ENCODE measurements at regions of chr16 and their contacts with region 1.

Region 1: DNA sequence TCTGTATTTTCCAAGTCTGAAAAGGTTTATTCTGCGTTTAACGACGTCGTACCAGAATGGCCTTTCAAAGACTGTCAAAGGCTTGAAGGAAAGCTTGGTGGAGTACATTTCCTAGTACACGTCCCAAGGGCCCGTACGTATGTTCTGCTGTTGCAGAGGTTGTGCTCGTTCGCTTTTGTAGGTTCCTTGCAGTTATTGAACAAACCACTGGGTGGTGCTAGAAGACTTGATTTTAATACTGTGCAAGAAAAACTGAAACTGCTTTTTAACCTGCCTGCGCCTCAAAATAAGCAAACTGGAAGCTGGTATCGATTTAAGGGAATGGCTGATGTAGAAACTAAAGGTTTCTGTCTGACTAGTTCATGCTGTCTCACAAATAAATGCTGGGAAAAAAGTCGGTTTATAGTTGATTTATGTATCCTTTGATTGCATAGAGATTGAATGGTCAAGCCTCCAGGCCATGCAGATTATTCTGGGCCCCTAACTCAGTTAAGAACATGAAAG is 54.6 kb downstream of the USP10 start:
- DNase-seq: no peak
- H3K4me3 ChIP-seq: peak overlapping the region in 1 of 4 donors; percentile 11
- H3K27ac ChIP-seq: peak overlapping the region; percentile 3 to 52 (median 40)
- H3K4me1 ChIP-seq: peaks cover 30 to 95% (median 84%) of the 10 kb centered on the region in 4 donors
- H3K27me3 ChIP-seq: no peaks in the 10 kb centered on the region
- CTCF ChIP-seq: peak; percentile 81 to 91 (median 85)
- EP300 ChIP-seq: no peak
- POLR2A ChIP-seq: no peak

Region 2: DNA sequence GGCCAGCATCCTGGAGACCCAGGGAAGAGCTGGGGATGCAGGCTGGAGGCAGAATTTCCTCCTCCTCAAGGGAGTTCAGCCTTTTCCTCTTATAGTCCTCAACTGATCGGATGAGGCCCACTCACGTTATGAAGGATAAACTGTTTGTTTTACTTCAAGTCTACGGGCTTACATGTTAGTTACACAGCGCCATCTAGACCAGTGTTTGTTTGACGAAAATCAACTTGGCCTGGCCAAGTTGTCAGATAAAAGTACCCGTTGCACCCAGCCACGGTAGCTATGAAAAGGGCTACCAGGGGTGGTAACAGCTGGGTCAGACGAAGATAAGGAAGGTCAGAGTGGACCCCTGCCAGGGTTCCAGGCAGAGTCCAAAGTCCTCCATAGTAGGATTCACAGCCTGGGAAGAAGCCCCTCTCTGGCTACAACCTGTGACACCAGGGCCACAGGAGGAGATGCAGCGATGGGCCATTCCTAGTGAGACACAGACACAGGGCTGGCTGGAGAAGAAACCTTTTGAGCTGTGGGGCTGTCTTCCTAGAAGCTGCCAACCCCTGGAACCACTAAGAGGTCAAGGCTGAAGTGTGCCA is 289.3 kb before region 1 on chr16:
- intact Hi-C with region 1: no loop called
- DNase-seq: no peak
- H3K4me3 ChIP-seq: no peak overlapping the region
- H3K27ac ChIP-seq: no peak overlapping the region
- H3K4me1 ChIP-seq: no peaks in the 10 kb centered on the region
- H3K27me3 ChIP-seq: no peaks in the 10 kb centered on the region
- CTCF ChIP-seq: no peak
- EP300 ChIP-seq: no peak
- POLR2A ChIP-seq: no peak

Region 3: GRCh38 chr16:84845496-84846129 is 91.2 kb after region 1 on chr16:
- intact Hi-C with region 1: loop called (anchors 5 kb)
- DNase-seq: no peak
- H3K4me3 ChIP-seq: no peak overlapping the region
- H3K27ac ChIP-seq: peak overlapping the region in 3 of 4 donors; percentile 94 to 97 (median 96)
- H3K4me1 ChIP-seq: peaks cover 7 to 64% (median 45%) of the 10 kb centered on the region in 4 donors
- H3K27me3 ChIP-seq: no peaks in the 10 kb centered on the region
- CTCF ChIP-seq: no peak
- EP300 ChIP-seq: no peak
- POLR2A ChIP-seq: no peak

Region 4: GRCh38 chr16:84952335-84953189 is 198.2 kb after region 1 on chr16:
- intact Hi-C with region 1: loop called (anchors 1 kb)
- DNase-seq: peak; percentile 95
- H3K4me3 ChIP-seq: no peak overlapping the region
- H3K27ac ChIP-seq: peak overlapping the region in 3 of 4 donors; percentile 57 to 70 (median 62)
- H3K4me1 ChIP-seq: peaks cover 9 to 24% (median 18%) of the 10 kb centered on the region in 4 donors
- H3K27me3 ChIP-seq: no peaks in the 10 kb centered on the region
- CTCF ChIP-seq: peak; percentile 85 to 93 (median 92)
- EP300 ChIP-seq: no peak
- POLR2A ChIP-seq: no peak

Region 5: DNA sequence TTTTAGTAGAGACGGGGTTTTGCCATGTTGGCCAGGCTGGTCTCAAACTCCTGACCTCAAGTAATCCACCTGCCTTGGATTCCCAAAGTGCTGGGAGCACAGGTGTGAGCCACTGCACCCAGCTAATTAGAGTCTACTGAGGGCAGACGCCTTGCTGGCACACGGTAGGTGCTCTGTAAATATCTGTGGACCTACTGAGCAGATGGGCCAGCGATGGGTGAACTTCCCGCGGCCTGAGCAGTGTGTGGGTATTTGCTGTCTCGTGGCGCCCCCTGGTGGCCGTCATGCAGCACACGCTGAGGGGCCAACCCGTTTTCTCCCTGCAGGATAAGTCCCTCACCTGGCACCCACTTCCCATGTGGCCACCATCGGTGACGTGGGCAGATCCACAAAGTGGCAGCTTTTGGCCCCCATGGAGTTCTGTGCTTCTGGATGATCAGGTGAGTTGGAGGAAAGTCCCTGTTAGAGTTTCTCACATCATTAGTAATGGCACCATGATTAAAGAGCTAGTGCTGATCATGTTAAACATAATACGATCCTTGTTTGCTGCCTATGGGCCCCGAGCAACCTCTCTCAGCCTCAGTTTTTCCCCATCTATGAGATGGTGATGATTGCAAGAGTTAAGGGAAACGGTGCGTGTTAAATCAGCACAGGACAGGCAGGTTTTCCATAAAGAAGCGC is 216.2 kb after region 1 on chr16:
- intact Hi-C with region 1: loop called (anchors 5 kb)
- DNase-seq: no peak
- H3K4me3 ChIP-seq: no peak overlapping the region
- H3K27ac ChIP-seq: peak overlapping the region in 1 of 4 donors; percentile 75
- H3K4me1 ChIP-seq: peaks cover 14 to 29% (median 21%) of the 10 kb centered on the region in 4 donors
- H3K27me3 ChIP-seq: no peaks in the 10 kb centered on the region
- CTCF ChIP-seq: peak; percentile 92 to 98 (median 94)
- EP300 ChIP-seq: no peak
- POLR2A ChIP-seq: no peak

Region 6: DNA sequence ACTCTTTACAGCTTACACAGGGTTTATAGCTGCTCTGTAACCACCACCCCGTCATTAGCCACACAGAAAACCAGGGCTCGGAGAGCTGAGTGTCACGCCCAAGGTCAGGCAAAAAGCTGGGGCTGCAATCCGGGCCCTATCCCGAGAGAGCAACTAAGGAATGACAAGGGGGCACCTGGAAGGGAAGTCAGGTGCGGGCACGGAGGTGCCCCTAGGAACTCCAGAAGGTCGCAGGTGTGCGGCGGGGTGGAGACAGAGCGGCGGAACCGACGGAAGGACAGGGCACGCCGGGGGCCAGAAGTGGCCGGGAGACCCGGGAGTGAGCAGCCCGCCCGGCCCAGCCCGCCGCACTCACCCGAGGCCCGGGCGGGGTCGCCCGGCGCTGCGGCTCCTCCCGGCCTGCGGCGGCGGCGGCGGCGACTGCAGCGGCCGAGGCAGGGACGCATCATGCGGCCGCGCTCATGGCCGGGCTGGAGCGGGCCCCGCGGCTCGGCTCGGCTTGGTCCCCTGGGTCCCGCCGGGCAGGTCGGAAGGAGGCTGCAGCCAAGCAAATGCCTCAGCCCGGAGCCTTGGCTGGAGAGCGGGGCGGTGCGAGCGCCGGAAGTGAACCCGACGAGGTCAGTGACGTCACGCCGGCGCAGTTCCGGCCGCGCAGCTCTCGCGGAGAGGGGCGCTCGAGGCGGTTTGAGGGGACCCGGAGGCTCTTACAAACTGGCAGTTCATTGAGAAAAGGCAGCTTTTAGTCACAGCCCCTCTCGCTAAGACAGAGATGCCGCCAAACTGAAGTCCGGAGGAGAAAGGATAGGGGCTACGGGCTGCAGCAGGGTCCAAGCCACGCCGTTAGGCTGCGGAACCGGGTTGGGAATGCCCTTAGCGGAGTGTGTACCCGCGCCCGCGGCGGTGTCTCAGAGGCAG is 256.8 kb after region 1 on chr16 and contains the start of gene ZDHHC7:
- intact Hi-C with region 1: no loop called
- DNase-seq: no peak
- H3K4me3 ChIP-seq: peak within 1 kb of the TSS; percentile 71 to 98 (median 86)
- H3K27ac ChIP-seq: peak within 1 kb of the TSS; percentile 95 to 98 (median 97)
- H3K4me1 ChIP-seq: peaks cover 42 to 58% (median 52%) of the 10 kb centered on the region in 4 donors
- H3K27me3 ChIP-seq: no peaks in the 10 kb centered on the region
- CTCF ChIP-seq: peak in 1 of 3 experiments; percentile 13
- EP300 ChIP-seq: no peak
- POLR2A ChIP-seq: peak; percentile 91
- total RNA-seq, gene ZDHHC7: 45.6 to 68.8 (median 54.3) TPM

Measured in esophagus muscularis mucosa (tissue), 4 donors.